Tibial artery (tissue), 4 donors: ENCODE measurements at regions of chr17 and their contacts with region 1.

Region 1: GRCh38 chr17:7479404-7480221 is at the start of gene ZBTB4:
- DNase-seq: peak; percentile 57 to 84
- H3K4me3 ChIP-seq: peak within 1 kb of the TSS; percentile 95 to 100
- H3K27ac ChIP-seq: peak within 1 kb of the TSS; percentile 100
- H3K4me1 ChIP-seq: peaks cover 0 to 60% (median 44%) of the 10 kb centered on the region in 4 donors
- H3K27me3 ChIP-seq: no peaks in the 10 kb centered on the region
- CTCF ChIP-seq: no peak

Region 2: DNA sequence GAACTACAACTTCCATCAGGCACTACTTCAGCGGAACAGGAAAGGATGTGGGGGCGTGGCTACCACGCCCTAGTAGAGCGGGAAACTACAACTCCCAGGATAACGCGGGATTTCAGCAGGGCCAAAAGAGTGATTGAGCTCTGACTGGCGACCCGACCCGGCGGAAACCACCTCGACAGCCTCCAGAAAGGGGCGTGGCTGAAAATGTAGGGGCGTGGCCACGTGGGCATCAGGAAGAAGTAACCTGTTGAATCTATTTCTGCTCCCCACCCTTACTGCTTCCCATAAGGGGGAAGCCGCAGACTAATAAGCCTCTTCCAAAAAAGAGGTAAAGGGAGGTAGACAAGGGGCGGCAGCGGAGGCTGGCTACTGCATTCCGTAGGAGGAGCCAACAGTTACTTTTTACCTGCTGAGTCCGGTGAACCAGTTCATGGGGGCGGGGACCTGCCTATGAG is 44.4 kb before region 1 on chr17 and contains the start of gene TMEM102:
- intact Hi-C with region 1: loop called (anchors 5 kb)
- DNase-seq: peak; percentile 97 to 98
- H3K4me3 ChIP-seq: peak within 1 kb of the TSS; percentile 55 to 71
- H3K27ac ChIP-seq: peak within 1 kb of the TSS; percentile 59 to 65
- H3K4me1 ChIP-seq: peaks cover 0 to 50% (median 40%) of the 10 kb centered on the region in 4 donors
- H3K27me3 ChIP-seq: peaks cover 3 to 30% of the 10 kb centered on the region in 2 donors
- CTCF ChIP-seq: no peak

Region 3: DNA sequence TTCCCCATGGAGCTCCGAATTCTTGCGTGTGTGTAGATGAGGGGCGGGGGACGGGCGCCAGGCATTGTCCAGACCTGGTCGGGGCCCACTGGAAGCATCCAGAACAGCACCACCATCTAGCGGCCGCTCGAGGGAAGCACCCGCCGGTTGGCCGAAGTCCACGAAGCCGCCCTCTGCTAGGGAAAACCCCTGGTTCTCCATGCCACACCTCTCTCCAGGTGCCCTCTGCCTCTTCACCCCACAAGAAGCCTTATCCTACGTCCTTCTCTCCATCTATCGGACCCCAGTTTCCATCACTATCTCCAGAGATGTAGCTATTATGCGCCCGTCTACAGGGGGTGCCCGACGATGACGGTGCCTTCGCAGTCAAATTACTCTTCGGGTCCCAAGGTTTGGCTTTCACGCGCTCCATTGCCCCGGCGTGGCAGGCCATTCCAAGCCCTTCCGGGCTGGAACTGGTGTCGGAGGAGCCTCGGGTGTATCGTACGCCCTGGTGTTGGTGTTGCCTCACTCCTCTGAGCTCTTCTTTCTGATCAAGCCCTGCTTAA is 81.5 kb after region 1 on chr17:
- intact Hi-C with region 1: no loop called
- DNase-seq: peak; percentile 87 to 94
- H3K4me3 ChIP-seq: peak overlapping the region; percentile 86 to 99
- H3K27ac ChIP-seq: peak overlapping the region; percentile 95 to 96
- H3K4me1 ChIP-seq: peaks cover 0 to 76% (median 62%) of the 10 kb centered on the region in 4 donors
- H3K27me3 ChIP-seq: no peaks in the 10 kb centered on the region
- CTCF ChIP-seq: peak; percentile 87 to 91